Dendritic cell treated with granulocyte-macrophage colony-stimulating factor and Interleukin-4, amounts not matched to agents 40 ng/mL and 50 ng/mL, for 4 days (primary cell): ENCODE measurements at regions of chr13 and their contacts with region 1.

Region 1: GRCh38 chr13:80141123-80141849 is 199.6 kb downstream of the SPRY2 start:
- H3K4me3 Mint-ChIP-seq: no peak overlapping the region
- H3K27ac Mint-ChIP-seq: no peak overlapping the region
- H3K4me1 Mint-ChIP-seq: peaks cover 7% of the 10 kb centered on the region
- H3K27me3 Mint-ChIP-seq: no peaks in the 10 kb centered on the region

Region 2: DNA sequence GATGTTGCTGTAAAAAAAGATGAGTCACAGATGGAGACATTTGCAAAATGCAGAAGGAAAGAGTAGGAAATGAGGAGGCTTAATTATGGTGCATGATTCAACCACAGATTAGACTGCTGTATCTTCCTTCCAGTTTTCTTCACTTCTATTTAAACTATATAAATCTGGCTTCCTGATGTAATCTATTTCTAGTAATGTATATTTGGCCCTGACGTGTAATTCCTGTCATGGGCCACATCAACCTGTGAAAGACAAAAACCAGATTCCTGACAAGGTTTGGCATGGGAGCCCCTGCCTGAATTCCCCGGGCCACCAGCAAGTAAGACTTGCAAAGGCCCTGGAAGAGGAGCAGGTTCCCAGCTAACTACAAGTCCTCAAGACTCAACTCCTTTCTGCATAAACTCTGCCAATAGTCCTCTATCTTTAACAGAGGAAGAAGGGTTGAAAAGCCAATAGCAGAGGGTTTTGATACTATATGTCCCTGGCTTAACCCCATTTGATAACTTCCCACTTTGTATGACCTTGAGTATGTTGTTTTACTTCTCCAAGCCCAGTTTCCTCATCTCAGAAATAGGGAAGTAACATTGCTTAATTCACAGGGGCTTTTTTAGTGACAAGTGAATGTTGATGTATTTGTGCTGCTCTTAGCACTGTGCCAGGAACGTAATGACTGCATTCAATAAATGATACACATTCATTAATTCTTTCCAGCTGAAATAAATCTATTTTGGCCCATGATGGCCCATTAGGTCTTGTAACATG is 27.0 kb after region 1 on chr13:
- intact Hi-C with region 1: no loop called
- H3K4me3 Mint-ChIP-seq: no peak overlapping the region
- H3K27ac Mint-ChIP-seq: peak overlapping the region; percentile 84
- H3K4me1 Mint-ChIP-seq: peaks cover 53% of the 10 kb centered on the region
- H3K27me3 Mint-ChIP-seq: peaks cover 31% of the 10 kb centered on the region

Region 3: GRCh38 chr13:80199585-80200292 is 58.5 kb after region 1 on chr13:
- intact Hi-C with region 1: loop called (anchors 10 kb)
- H3K4me3 Mint-ChIP-seq: no peak overlapping the region
- H3K27ac Mint-ChIP-seq: no peak overlapping the region
- H3K4me1 Mint-ChIP-seq: no peaks in the 10 kb centered on the region
- H3K27me3 Mint-ChIP-seq: no peaks in the 10 kb centered on the region

Region 4: GRCh38 chr13:80348314-80348713 is 207.0 kb after region 1 on chr13:
- intact Hi-C with region 1: no loop called
- H3K4me3 Mint-ChIP-seq: no peak overlapping the region
- H3K27ac Mint-ChIP-seq: no peak overlapping the region
- H3K4me1 Mint-ChIP-seq: peaks cover 4% of the 10 kb centered on the region
- H3K27me3 Mint-ChIP-seq: peaks cover 19% of the 10 kb centered on the region

Region 5: GRCh38 chr13:81184556-81185265 is 1043.4 kb after region 1 on chr13:
- intact Hi-C with region 1: no loop called
- H3K4me3 Mint-ChIP-seq: no peak overlapping the region
- H3K27ac Mint-ChIP-seq: no peak overlapping the region
- H3K4me1 Mint-ChIP-seq: no peaks in the 10 kb centered on the region
- H3K27me3 Mint-ChIP-seq: no peaks in the 10 kb centered on the region